Tibial artery (tissue), 4 donors: ENCODE measurements at regions of chr7 and their contacts with region 1.

Region 1: DNA sequence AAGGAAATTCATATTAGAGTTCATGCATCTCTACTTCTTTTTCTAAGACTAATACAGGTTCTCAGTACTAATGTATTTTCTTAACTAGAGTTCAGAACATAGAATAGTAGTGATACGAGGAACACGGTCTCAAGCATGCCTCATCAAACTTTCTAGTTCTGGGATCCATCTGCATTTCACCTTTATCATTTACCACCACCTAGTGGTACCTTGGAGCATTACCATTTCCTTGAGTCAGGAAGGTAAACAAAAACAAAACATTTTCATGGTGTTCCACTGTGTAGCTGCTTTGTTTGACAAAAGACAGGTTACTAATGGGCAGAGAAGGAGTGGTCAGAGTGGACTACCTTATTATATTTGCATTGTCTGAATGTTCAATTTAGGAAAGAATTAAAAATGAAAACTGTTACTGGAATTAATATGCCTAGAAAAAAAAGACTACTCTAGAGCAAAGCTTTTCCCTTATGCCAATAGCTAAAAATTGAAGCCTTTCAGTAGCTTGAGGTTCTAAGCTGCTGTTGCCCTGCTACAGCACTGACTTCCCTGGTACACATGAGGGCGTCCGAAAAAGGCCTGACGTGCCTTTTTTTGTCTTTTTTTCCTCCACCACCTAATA is 44.5 kb downstream of the STARD3NL start:
- DNase-seq: no peak
- H3K4me3 ChIP-seq: no peak overlapping the region
- H3K27ac ChIP-seq: peak overlapping the region in 1 of 2 donors; percentile 36
- H3K4me1 ChIP-seq: peaks cover 0 to 8% (median 0%) of the 10 kb centered on the region in 4 donors
- H3K27me3 ChIP-seq: no peaks in the 10 kb centered on the region
- CTCF ChIP-seq: peak; percentile 88 to 89

Region 2: GRCh38 chr7:37901236-37901827 is 321.3 kb before region 1 on chr7:
- intact Hi-C with region 1: loop called (anchors 5 kb)
- DNase-seq: no peak
- H3K4me3 ChIP-seq: no peak overlapping the region
- H3K27ac ChIP-seq: no peak overlapping the region
- H3K4me1 ChIP-seq: peaks cover 0 to 10% (median 7%) of the 10 kb centered on the region in 4 donors
- H3K27me3 ChIP-seq: no peaks in the 10 kb centered on the region
- CTCF ChIP-seq: peak; percentile 58 to 75

Region 3: GRCh38 chr7:38107486-38107893 is 115.1 kb before region 1 on chr7:
- intact Hi-C with region 1: loop called (anchors 2 kb)
- DNase-seq: peak; percentile 55 to 67
- H3K4me3 ChIP-seq: no peak overlapping the region
- H3K27ac ChIP-seq: no peak overlapping the region
- H3K4me1 ChIP-seq: peaks cover 0 to 8% (median 0%) of the 10 kb centered on the region in 4 donors
- H3K27me3 ChIP-seq: no peaks in the 10 kb centered on the region
- CTCF ChIP-seq: peak; percentile 58 to 67

Region 4: DNA sequence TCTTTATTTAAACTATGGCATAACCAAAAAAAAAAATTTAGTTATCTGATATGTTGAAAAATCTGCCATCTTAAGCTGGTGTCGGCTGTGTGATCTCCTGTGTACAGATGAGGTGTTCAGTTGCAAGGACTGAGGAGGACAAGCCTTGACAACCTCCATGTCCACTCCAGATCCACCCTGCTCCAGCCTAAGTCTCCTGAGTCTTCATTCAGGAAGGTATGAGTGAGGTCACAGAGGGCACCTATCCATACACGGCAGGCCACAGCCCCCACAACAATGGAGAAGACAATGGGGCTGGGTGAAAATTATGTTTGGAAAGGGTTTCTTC is 34.7 kb after region 1 on chr7:
- intact Hi-C with region 1: no loop called
- DNase-seq: no peak
- H3K4me3 ChIP-seq: no peak overlapping the region
- H3K27ac ChIP-seq: no peak overlapping the region
- H3K4me1 ChIP-seq: no peaks in the 10 kb centered on the region
- H3K27me3 ChIP-seq: no peaks in the 10 kb centered on the region
- CTCF ChIP-seq: no peak

Region 5: DNA sequence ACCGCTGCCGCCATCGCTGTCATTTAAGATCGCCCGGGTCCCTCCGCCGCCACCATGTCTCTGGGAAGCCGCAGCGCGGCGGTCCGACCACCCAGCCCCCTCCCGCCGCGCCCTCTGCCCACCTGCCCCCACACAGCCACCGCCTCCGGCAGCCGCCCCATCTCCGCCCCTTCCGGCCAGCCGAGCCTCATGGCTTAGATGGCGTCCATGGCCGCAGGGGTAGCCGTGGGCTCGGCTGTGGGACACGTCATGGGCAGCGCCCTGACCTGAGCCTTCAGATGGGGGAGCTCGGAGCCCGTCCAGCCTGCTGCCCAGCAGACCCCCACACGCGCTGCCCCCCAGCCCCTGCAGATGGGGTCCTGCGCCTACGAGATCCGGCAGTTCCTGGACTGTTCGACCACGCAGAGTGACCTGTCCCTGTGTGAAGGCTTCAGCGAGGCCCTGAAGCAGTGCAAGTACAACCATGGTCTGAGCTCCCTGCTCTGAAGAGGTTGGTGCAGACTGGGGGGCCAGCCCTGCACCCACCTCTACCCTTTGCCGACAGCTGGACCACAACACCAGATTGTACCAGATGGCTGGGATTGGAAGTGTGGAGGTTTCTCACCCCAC is 88.8 kb after region 1 on chr7:
- intact Hi-C with region 1: no loop called
- DNase-seq: no peak
- H3K4me3 ChIP-seq: peak overlapping the region; percentile 45 to 47
- H3K27ac ChIP-seq: no peak overlapping the region
- H3K4me1 ChIP-seq: peaks cover 0 to 15% (median 2%) of the 10 kb centered on the region in 4 donors
- H3K27me3 ChIP-seq: peaks cover 0 to 5% of the 10 kb centered on the region in 2 donors
- CTCF ChIP-seq: no peak